ENCODE measurements at regions of chr17 and their contacts with region 1.

Region 1: GRCh38 chr17:752002-752619 is at the start of gene GEMIN4:
- DNase-seq: peak; percentile 97 to 99
- ATAC-seq: peak; percentile 91 to 98 (median 93)
- H3K4me3 ChIP-seq: peak within 1 kb of the TSS; percentile 58
- H3K4me3 Mint-ChIP-seq: peak within 1 kb of the TSS; percentile 94
- H3K27ac ChIP-seq: peak within 1 kb of the TSS; percentile 54
- H3K27ac Mint-ChIP-seq: peak within 1 kb of the TSS; percentile 84 to 89
- H3K4me1 ChIP-seq: peaks cover 19% of the 10 kb centered on the region
- H3K4me1 Mint-ChIP-seq: peaks cover 23 to 42% of the 10 kb centered on the region in 2 donors
- H3K27me3 ChIP-seq: no peaks in the 10 kb centered on the region
- H3K27me3 Mint-ChIP-seq: no peaks in the 10 kb centered on the region
- CTCF ChIP-seq: peak; percentile 92
- total RNA-seq, gene GEMIN4: 13.7 to 17.1 (median 13.7) TPM

Region 2: GRCh38 chr17:732067-732901 is 19.8 kb before region 1 on chr17 and contains the start of gene TLCD3A:
- intact Hi-C with region 1: loop called (anchors 2 kb)
- DNase-seq: peak; percentile 30 to 65
- ATAC-seq: peak; percentile 71 to 82 (median 82)
- H3K4me3 ChIP-seq: peak within 1 kb of the TSS; percentile 38
- H3K4me3 Mint-ChIP-seq: peak within 1 kb of the TSS; percentile 94
- H3K27ac ChIP-seq: no peak within 1 kb of the TSS
- H3K27ac Mint-ChIP-seq: peak within 1 kb of the TSS in 1 of 2 donors; percentile 56
- H3K4me1 ChIP-seq: peaks cover 12% of the 10 kb centered on the region
- H3K4me1 Mint-ChIP-seq: peaks cover 8 to 19% of the 10 kb centered on the region in 2 donors
- H3K27me3 ChIP-seq: no peaks in the 10 kb centered on the region
- H3K27me3 Mint-ChIP-seq: no peaks in the 10 kb centered on the region
- CTCF ChIP-seq: no peak
- total RNA-seq, gene TLCD3A: 0.75 to 3.1 (median 1.8) TPM

Region 3: DNA sequence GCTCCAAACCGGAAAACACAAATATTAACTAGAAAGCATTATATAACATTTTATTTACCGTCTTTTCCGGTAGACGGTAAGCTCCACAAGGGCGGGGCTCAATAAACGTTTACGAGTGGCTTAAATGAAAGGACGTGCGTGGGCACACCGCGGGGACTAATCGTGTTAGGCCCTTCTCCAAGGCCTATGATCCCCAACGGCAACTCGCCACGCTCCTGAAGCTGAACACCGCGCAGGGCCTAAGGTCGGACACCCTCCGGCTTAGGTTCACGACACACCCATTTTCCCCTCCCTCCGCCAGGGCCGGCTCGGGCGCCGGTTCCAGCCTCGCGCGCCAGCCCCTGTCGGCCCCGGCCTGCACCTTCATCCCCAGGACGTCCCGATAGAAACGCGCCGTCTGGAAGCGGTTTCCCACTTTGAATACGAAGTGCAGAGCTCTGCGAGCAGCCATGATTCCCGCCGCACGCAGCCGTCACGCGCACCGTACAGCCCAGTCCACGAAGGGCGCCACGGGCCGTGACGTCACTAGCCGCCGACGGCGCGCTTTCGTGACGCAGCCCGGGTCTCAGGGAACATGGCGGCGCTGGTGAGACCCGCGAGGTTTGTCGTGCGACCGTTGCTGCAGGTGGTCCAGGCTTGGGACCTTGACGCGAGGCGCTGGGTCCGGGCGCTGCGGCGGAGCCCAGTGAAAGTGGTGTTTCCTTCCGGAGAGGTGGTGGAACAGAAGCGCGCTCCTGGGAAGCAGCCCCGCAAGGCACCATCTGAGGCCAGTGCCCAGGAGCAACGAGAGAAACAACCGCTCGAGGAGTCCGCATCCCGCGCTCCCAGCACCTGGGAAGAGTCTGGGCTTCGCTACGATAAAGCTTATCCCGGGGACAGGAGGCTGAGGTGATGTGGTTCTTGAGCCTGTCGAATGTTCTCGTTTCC is 30.0 kb after region 1 on chr17 and contains the starts of genes GLOD4 and MRM3:
- intact Hi-C with region 1: loop called (anchors 1 kb)
- DNase-seq: peak; percentile 98 to 99
- ATAC-seq: peak; percentile 96 to 97 (median 96)
- H3K4me3 ChIP-seq: peak within 1 kb of the TSS; percentile 67
- H3K4me3 Mint-ChIP-seq: peak within 1 kb of the TSS; percentile 98
- H3K27ac ChIP-seq: peak within 1 kb of the TSS; percentile 67
- H3K27ac Mint-ChIP-seq: peak within 1 kb of the TSS; percentile 97 to 99
- H3K4me1 ChIP-seq: peaks cover 20% of the 10 kb centered on the region
- H3K4me1 Mint-ChIP-seq: peaks cover 22 to 27% of the 10 kb centered on the region in 2 donors
- H3K27me3 ChIP-seq: no peaks in the 10 kb centered on the region
- H3K27me3 Mint-ChIP-seq: no peaks in the 10 kb centered on the region
- CTCF ChIP-seq: no peak
- total RNA-seq, gene GLOD4: 62.5 to 67.1 (median 63.5) TPM
- total RNA-seq, gene MRM3: 24.3 to 32.2 (median 31.9) TPM

Measured in natural killer cell (primary cell).